IMR-90 (cell line): ENCODE measurements at regions of chr3 and their contacts with region 1.

Region 1: DNA sequence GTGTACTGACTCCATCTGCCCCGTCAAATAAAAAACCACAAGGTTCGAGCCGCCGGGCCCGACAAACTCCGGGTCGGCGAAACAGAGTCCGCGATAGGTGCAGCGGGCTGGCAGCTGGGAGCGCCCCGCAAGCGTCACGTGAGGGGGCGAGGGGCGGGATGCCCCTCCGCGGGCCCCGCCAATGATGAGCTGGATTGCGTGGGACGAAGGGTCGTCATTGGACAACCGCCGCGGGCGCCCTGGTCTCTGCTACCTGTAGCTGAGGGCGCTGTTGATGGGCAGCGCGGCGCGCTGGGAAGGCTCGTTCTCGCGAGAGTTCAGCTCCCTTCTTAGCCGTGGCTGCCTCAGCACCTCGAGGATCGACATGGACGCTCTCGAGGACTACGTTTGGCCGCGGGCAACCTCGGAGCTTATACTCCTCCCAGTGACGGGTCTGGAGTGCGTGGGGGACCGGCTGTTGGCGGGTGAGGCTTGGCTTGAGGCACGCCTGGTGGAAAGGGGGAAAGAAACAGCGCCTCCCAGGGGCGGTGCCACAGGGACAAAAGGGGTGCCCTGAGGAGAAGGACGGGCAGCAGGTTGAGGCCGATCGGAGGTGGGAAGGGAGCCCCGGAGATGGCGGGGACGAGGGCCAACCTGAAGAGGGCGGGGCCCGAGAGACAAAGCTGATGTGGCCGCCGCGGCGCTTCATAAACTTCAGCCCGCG is at the start of gene WDR6:
- DNase-seq: peak; percentile 97
- ATAC-seq: peak; percentile 87
- H3K4me3 ChIP-seq: peak within 1 kb of the TSS; percentile 87
- H3K27ac ChIP-seq: peak within 1 kb of the TSS; percentile 99
- H3K4me1 ChIP-seq: peaks cover 11% of the 10 kb centered on the region
- H3K27me3 ChIP-seq: no peaks in the 10 kb centered on the region
- CTCF ChIP-seq: peak; percentile 36
- POLR2A ChIP-seq: peak; percentile 90
- RAD21 ChIP-seq: peak; percentile 4; the same call in 1 of the 2 replicates
- total RNA-seq, gene WDR6: 55.8 and 60.9 TPM in 2 replicates

Region 2: GRCh38 chr3:49021813-49022687 is 14.8 kb after region 1 on chr3 and contains the start of gene NDUFAF3:
- CTCF ChIA-PET with region 1: interaction called, 5 read pairs
- POLR2A ChIA-PET with region 1: interaction called, 13 read pairs
- dilution Hi-C with region 1: no loop called
- in situ Hi-C with region 1: no loop called
- intact Hi-C with region 1: no loop called
- DNase-seq: peak; percentile 92
- ATAC-seq: peak; percentile 74
- H3K4me3 ChIP-seq: peak within 1 kb of the TSS; percentile 84
- H3K27ac ChIP-seq: peak within 1 kb of the TSS; percentile 93
- H3K4me1 ChIP-seq: peaks cover 10% of the 10 kb centered on the region
- H3K27me3 ChIP-seq: no peaks in the 10 kb centered on the region
- CTCF ChIP-seq: peak; percentile 96
- POLR2A ChIP-seq: peak; percentile 40; the same call in 1 of the 2 replicates
- RAD21 ChIP-seq: no peak
- total RNA-seq, gene NDUFAF3: 26.5 and 43.3 TPM in 2 replicates

Region 3: GRCh38 chr3:49076646-49077045 is 69.4 kb after region 1 on chr3:
- CTCF ChIA-PET with region 1: no interaction called
- POLR2A ChIA-PET with region 1: no interaction called
- dilution Hi-C with region 1: no loop called
- in situ Hi-C with region 1: no loop called
- intact Hi-C with region 1: no loop called
- DNase-seq: no peak
- ATAC-seq: no peak
- H3K4me3 ChIP-seq: no peak overlapping the region
- H3K27ac ChIP-seq: no peak overlapping the region
- H3K4me1 ChIP-seq: no peaks in the 10 kb centered on the region
- H3K27me3 ChIP-seq: no peaks in the 10 kb centered on the region
- CTCF ChIP-seq: no peak
- POLR2A ChIP-seq: no peak
- RAD21 ChIP-seq: no peak